HepG2 (cell line): ENCODE measurements at regions of chr11 and their contacts with region 1.

Region 1: DNA sequence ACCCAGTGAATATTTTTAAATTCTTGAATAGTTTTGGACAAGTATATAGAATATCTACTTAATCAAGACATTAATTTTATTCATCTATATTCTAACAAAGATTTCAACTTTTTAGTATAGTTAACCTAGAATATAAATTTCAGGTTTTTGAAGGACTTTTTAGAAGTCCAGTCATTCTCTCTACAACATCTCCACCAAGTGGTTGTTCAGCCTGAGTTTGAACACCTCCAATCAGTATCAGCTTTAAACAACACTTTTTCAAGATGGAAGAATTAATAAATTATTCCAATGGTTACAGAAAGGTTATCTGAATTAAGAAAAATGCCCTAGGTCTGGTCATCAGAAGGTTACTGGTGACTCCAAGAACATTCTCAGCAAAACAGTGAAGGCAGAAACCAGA is 31.8 kb downstream of the EIF3M start:
- DNase-seq: peak; percentile 7
- ATAC-seq: no peak
- H3K4me3 ChIP-seq: no peak overlapping the region
- H3K27ac ChIP-seq: no peak overlapping the region
- H3K4me1 ChIP-seq: peaks cover 14% of the 10 kb centered on the region
- H3K27me3 ChIP-seq: no peaks in the 10 kb centered on the region
- CTCF ChIP-seq: peak; percentile 25; the same call in 1 of the 2 replicates
- EP300 ChIP-seq: no peak
- POLR2A ChIP-seq: no peak
- RAD21 ChIP-seq: no peak

Region 2: GRCh38 chr11:32323814-32324130 is 291.6 kb before region 1 on chr11:
- CTCF ChIA-PET with region 1: no interaction called
- POLR2A ChIA-PET with region 1: no interaction called
- in situ Hi-C with region 1: no loop called
- intact Hi-C with region 1: loop called (anchors 2 kb)
- DNase-seq: no peak
- ATAC-seq: no peak
- H3K4me3 ChIP-seq: no peak overlapping the region
- H3K27ac ChIP-seq: no peak overlapping the region
- H3K4me1 ChIP-seq: no peaks in the 10 kb centered on the region
- H3K27me3 ChIP-seq: peaks cover 0 to 20% of the 10 kb centered on the region in 2 experiments; a peak in 1 of 5 replicates
- CTCF ChIP-seq: no peak
- EP300 ChIP-seq: no peak
- POLR2A ChIP-seq: no peak
- RAD21 ChIP-seq: no peak

Region 3: GRCh38 chr11:32385998-32386397 is 229.4 kb before region 1 on chr11:
- CTCF ChIA-PET with region 1: no interaction called
- POLR2A ChIA-PET with region 1: no interaction called
- in situ Hi-C with region 1: no loop called
- intact Hi-C with region 1: loop called (anchors 1 kb)
- DNase-seq: peak; percentile 17
- ATAC-seq: peak; percentile 95
- H3K4me3 ChIP-seq: no peak overlapping the region
- H3K27ac ChIP-seq: no peak overlapping the region
- H3K4me1 ChIP-seq: no peaks in the 10 kb centered on the region
- H3K27me3 ChIP-seq: peaks cover 6 to 46% of the 10 kb centered on the region in 2 experiments
- CTCF ChIP-seq: peak; percentile 32
- EP300 ChIP-seq: no peak
- POLR2A ChIP-seq: no peak
- RAD21 ChIP-seq: no peak